A673 (cell line): ENCODE measurements at regions of chr1 and their contacts with region 1.

Region 1: DNA sequence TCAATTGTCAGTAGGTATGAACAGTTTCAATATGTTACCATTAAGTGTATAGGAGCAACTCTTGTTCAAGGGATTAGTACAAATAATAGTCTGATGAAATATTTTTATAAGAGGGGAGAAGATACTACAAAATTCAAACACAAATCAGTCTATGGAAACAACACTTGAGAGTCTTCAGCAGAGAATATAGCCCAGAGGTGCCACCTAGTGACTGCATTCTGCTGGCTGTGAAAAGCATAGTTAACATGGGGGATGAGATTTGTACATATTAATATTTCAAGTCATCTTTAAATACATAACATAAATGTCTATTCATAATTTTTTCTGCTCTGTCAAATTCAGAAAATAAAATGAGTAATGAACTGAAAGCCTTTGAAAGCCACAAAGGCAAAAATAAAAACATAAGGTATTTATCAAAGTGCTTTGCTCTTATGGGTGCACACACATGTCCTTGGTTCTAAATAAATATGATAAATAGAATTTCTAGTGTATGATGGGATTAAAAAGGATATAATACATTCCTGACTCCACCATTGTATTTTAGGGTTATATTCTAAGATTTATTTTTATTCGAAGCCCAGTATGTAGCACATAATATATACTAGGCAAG is 440.9 kb upstream of the ZRANB2 start:
- DNase-seq: peak; percentile 66
- H3K4me3 ChIP-seq: no peak overlapping the region
- H3K27ac ChIP-seq: no peak overlapping the region
- H3K4me1 ChIP-seq: no peaks in the 10 kb centered on the region
- H3K27me3 ChIP-seq: no peaks in the 10 kb centered on the region
- CTCF ChIP-seq: peak; percentile 90

Region 2: DNA sequence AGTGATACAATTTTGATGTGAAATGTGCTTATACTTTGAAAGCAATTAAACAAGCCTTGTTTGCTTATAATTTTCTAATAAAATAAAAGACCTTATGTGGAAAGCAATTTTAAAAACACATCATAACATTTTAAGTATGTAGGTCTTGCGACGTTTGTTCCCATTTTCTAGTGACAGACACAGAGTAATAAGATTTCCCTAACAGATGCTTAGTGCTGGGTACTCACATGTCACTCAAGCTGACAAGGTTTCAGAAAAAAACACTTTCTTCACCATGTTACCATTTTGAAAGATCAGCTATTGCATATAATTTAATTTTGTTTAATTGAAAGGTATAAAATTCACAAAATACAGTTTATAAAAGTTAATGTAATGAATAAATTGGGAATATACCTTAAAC is 426.8 kb before region 1 on chr1:
- CTCF ChIA-PET with region 1: no interaction called
- POLR2A ChIA-PET with region 1: no interaction called
- intact Hi-C with region 1: loop called (anchors 5 kb)
- DNase-seq: no peak
- H3K4me3 ChIP-seq: no peak overlapping the region
- H3K27ac ChIP-seq: no peak overlapping the region
- H3K4me1 ChIP-seq: no peaks in the 10 kb centered on the region
- H3K27me3 ChIP-seq: no peaks in the 10 kb centered on the region
- CTCF ChIP-seq: no peak

Region 3: GRCh38 chr1:71196685-71197084 is 325.1 kb before region 1 on chr1:
- CTCF ChIA-PET with region 1: no interaction called
- POLR2A ChIA-PET with region 1: no interaction called
- intact Hi-C with region 1: loop called (anchors 2 kb)
- DNase-seq: peak; percentile 56
- H3K4me3 ChIP-seq: no peak overlapping the region
- H3K27ac ChIP-seq: no peak overlapping the region
- H3K4me1 ChIP-seq: no peaks in the 10 kb centered on the region
- H3K27me3 ChIP-seq: no peaks in the 10 kb centered on the region
- CTCF ChIP-seq: peak; percentile 61